ENCODE measurements at regions of chr15 and their contacts with region 1.

Region 1: GRCh38 chr15:39756806-39757522 is 25.7 kb downstream of the FSIP1 start:
- DNase-seq: no peak
- ATAC-seq: no peak

Region 2: GRCh38 chr15:39686000-39686613 is 70.9 kb before region 1 on chr15:
- intact Hi-C with region 1: loop called (anchors 10 kb)
- DNase-seq: no peak
- ATAC-seq: peak; percentile 69

Region 3: GRCh38 chr15:39801641-39802309 is 44.8 kb after region 1 on chr15:
- intact Hi-C with region 1: no loop called
- DNase-seq: no peak
- ATAC-seq: peak; percentile 20